ENCODE measurements at regions of chr5 and their contacts with region 1.

Region 1: GRCh38 chr5:64229163-64229774 is 63.6 kb downstream of the RNF180 start:
- DNase-seq: no peak
- H3K4me3 Mint-ChIP-seq: no peak overlapping the region
- H3K27ac Mint-ChIP-seq: no peak overlapping the region
- H3K4me1 Mint-ChIP-seq: no peaks in the 10 kb centered on the region
- H3K27me3 Mint-ChIP-seq: no peaks in the 10 kb centered on the region

Region 2: DNA sequence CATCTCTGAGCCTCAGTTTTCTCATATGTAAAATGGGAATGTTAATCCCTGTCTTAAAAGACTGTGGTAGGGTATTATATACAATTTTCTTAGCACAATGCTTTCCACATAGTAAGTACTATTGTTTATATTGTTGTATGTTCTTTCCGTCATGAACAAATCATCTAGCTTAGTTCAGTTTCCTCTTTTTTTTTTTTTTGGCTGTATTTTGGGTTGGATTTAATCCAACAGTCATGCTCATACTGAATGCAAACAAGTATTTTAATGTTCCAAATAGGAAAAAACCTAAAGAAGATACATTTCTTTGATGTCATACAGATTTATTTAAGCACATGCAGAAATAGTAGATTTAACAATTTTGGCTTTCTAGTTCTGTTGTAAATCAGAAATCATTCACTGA is 31.5 kb after region 1 on chr5:
- intact Hi-C with region 1: no loop called
- DNase-seq: no peak
- H3K4me3 Mint-ChIP-seq: no peak overlapping the region
- H3K27ac Mint-ChIP-seq: no peak overlapping the region
- H3K4me1 Mint-ChIP-seq: no peaks in the 10 kb centered on the region
- H3K27me3 Mint-ChIP-seq: no peaks in the 10 kb centered on the region

Region 3: GRCh38 chr5:64612344-64612961 is 383.2 kb after region 1 on chr5:
- intact Hi-C with region 1: loop called (anchors 1 kb)
- DNase-seq: no peak
- H3K4me3 Mint-ChIP-seq: no peak overlapping the region
- H3K27ac Mint-ChIP-seq: no peak overlapping the region
- H3K4me1 Mint-ChIP-seq: no peaks in the 10 kb centered on the region
- H3K27me3 Mint-ChIP-seq: peaks cover 6% of the 10 kb centered on the region